ENCODE measurements at regions of chr1 and their contacts with region 1.

Region 1: DNA sequence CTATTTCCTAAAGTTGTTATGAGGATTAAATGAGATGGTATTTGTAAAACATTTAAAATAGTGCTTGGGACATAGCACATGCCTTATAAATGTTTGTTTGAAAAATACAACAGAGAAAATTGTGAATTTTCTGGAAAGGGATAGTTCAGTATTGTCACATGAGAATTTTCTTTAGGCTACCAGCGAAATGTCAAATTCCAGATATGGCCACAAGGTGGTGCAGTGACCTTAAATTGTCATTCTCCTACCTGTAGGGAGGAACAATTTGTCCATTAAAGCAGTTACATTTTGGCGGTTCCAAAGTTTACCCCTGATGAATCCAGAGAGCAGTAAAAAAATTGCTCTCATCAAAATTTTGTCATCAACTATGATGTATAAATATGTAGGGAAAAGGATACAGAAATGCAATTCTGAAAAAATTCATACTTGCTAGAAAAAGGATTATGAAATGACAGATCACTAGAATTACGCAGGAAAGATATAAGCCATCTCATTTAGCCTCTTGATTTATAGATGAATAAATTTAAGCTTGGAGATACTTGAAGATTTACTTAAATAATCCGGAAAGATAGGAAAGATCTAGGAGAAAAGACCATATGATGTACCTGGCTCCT is 50.2 kb upstream of the TSHB start:
- DNase-seq: peak; percentile 32 to 69 (median 56)
- ATAC-seq: peak; percentile 76
- H3K4me3 ChIP-seq: no peak overlapping the region
- H3K4me3 Mint-ChIP-seq: no peak overlapping the region
- H3K27ac ChIP-seq: no peak overlapping the region
- H3K27ac Mint-ChIP-seq: no peak overlapping the region
- H3K4me1 ChIP-seq: no peaks in the 10 kb centered on the region
- H3K4me1 Mint-ChIP-seq: no peaks in the 10 kb centered on the region
- H3K27me3 ChIP-seq: no peaks in the 10 kb centered on the region
- H3K27me3 Mint-ChIP-seq: peaks cover 5 to 23% (median 14%) of the 10 kb centered on the region in 5 donors

Region 2: GRCh38 chr1:115052454-115053083 is 73.2 kb after region 1 on chr1:
- CTCF ChIA-PET with region 1: interaction called, 10 read pairs
- POLR2A ChIA-PET with region 1: no interaction called
- intact Hi-C with region 1: loop called (anchors 1 kb)
- DNase-seq: peak in 8 of 9 donors; percentile 18 to 58 (median 47)
- ATAC-seq: peak; percentile 94
- H3K4me3 ChIP-seq: no peak overlapping the region
- H3K4me3 Mint-ChIP-seq: no peak overlapping the region
- H3K27ac ChIP-seq: no peak overlapping the region
- H3K27ac Mint-ChIP-seq: no peak overlapping the region
- H3K4me1 ChIP-seq: no peaks in the 10 kb centered on the region
- H3K4me1 Mint-ChIP-seq: peaks cover 0 to 5% (median 4%) of the 10 kb centered on the region in 7 donors
- H3K27me3 ChIP-seq: no peaks in the 10 kb centered on the region
- H3K27me3 Mint-ChIP-seq: peaks cover 0 to 12% (median 0%) of the 10 kb centered on the region in 5 donors

Measured in naive thymus-derived CD4-positive, alpha-beta T cell (primary cell).